Left cardiac atrium (tissue), 4 donors: ENCODE measurements at regions of chr13 and their contacts with region 1.

Region 1: GRCh38 chr13:22801402-22802003 is 379.3 kb upstream of the SGCG start:
- DNase-seq: no peak
- ATAC-seq: peak in 1 of 2 donors; percentile 31

Region 2: GRCh38 chr13:23020223-23020843 is 218.8 kb after region 1 on chr13:
- intact Hi-C with region 1: loop called (anchors 5 to 10 kb)
- DNase-seq: peak; percentile 31
- ATAC-seq: peak; percentile 65 to 78

Region 3: DNA sequence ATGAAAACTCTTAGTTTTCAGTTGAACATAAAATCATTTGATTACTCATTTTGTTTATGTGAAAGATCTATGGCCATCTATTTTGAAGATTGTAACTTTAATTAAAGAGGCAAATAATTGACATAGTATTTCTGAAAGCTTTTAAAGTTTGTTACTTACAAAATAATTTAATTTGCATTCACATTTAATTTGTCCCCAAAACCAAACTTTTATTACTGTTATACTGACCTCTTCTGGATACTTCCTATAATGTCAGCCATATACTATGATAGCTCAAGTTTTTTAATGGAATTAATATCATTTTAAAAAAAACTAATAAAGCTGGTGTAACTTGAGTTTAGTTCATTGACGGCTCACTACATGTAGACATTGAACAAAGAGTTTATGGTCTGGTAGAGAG is 374.4 kb after region 1 on chr13:
- intact Hi-C with region 1: loop called in 1 of 2 experiments (anchors 2 kb)
- DNase-seq: no peak
- ATAC-seq: no peak

Region 4: DNA sequence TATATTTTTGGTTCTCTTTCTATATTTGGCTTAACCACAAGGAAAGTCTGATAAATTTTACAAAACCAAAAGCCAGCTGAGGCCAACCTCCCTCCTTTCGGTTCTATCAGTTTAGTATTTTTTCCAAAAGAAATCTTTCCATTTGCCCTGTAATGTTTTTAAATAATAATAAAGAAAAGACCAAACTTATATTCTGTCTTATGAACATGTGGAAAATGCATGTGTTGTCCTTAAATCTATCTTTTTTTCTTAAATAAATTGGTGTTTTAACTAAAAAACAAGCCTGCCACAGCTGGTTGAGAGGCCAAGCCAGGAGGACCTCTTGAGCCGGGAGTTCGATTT is 518.4 kb after region 1 on chr13:
- intact Hi-C with region 1: loop called in 1 of 2 experiments (anchors 10 kb)
- DNase-seq: no peak
- ATAC-seq: no peak